WTC11 (cell line): ENCODE measurements at regions of chr17 and their contacts with region 1.

Region 1: GRCh38 chr17:38544839-38545209 is 60.9 kb downstream of the SRCIN1 start:
- DNase-seq: peak; percentile 43
- ATAC-seq: peak; percentile 20; the same call in 1 of the 2 replicates
- H3K4me3 Mint-ChIP-seq: no peak overlapping the region
- H3K27ac Mint-ChIP-seq: no peak overlapping the region
- H3K4me1 Mint-ChIP-seq: peaks cover 18% of the 10 kb centered on the region
- H3K27me3 Mint-ChIP-seq: peaks cover 2% of the 10 kb centered on the region; the same call in 1 of the 2 replicates
- CTCF ChIP-seq: no peak

Region 2: GRCh38 chr17:38533866-38534497 is 10.8 kb before region 1 on chr17:
- CTCF ChIA-PET with region 1: interaction called, 10 read pairs
- POLR2A ChIA-PET with region 1: no interaction called
- DNase-seq: no peak
- ATAC-seq: peak; percentile 27
- H3K4me3 Mint-ChIP-seq: no peak overlapping the region
- H3K27ac Mint-ChIP-seq: no peak overlapping the region
- H3K4me1 Mint-ChIP-seq: peaks cover 33% of the 10 kb centered on the region
- H3K27me3 Mint-ChIP-seq: peaks cover 53% of the 10 kb centered on the region
- CTCF ChIP-seq: no peak

Region 3: DNA sequence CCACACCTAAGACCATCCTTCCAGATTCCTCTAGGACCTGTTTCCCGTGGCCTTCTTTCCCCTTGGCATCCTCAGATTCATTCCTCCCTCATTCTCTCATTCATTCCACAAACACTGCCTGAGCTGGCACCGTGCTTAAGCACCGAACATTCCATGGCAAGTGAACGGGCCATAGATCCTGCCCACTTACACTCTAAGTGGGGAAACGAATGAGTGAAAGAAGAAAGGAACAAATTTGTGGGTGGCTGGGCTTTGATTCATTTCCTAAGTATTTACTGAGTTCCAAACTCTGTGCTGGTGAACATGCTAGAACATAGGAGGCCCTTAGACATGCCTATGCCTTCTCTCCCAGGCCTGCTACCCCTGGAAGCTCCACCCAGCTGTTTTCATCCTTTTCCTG is 31.0 kb after region 1 on chr17:
- CTCF ChIA-PET with region 1: no interaction called
- POLR2A ChIA-PET with region 1: no interaction called
- DNase-seq: no peak
- ATAC-seq: no peak
- H3K4me3 Mint-ChIP-seq: no peak overlapping the region
- H3K27ac Mint-ChIP-seq: no peak overlapping the region
- H3K4me1 Mint-ChIP-seq: peaks cover 59% of the 10 kb centered on the region
- H3K27me3 Mint-ChIP-seq: peaks cover 93% of the 10 kb centered on the region
- CTCF ChIP-seq: no peak